BJ (cell line): ENCODE measurements at regions of chr14 and their contacts with region 1.

Region 1: DNA sequence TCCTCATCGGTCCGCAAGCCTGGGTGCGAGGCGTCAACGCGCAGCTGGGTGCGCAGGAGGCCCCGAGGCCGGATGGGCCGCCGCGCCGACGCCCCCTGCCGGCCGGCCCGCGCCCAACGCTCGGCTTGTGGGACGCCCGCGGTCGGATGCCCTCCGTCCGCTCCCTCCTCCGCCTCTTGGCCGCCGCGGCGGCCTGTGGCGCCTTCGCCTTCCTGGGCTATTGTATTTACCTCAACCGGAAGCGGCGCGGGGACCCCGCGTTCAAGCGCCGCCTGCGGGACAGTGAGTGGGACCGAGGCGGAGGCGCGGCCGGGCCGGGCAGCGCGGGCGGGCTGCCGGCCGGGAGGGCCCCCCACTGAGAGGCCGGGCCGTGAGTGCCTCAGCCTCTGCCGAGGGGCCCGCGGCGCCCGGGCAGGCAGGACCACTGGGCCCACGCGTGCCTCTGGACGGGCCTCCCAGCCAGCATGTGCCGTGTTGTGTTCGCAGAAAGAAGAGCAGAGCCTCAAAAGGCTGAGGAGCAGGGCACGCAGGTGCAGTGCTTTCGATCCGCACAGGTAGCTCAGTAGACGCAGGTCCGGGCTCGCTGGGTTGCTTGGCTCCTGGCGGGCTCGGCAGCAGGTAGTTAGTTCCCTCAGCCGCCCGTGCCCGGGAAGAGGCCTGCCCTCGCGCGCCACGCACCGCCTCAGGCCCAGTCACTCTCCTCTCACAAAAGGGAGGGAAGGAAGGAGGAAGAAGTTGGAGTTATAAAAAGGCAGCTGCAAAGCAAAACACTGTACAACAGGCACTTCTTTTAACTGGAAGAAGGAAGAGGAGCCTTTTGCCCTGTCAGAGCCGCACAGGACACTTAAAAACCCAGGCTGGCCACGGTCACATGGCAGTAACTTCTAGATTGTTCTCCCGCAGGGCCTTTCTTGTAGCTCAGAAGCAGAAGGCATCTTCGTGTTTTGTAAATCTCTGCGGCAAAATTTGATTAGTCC is at the start of gene TOMM20L:
- DNase-seq: no peak
- H3K4me3 ChIP-seq: peak within 1 kb of the TSS; percentile 45
- H3K27me3 ChIP-seq: no peaks in the 10 kb centered on the region
- CTCF ChIP-seq: no peak
- polyA plus RNA-seq, gene TOMM20L: not detected in 2 replicates

Region 2: GRCh38 chr14:58107947-58108552 is 288.1 kb before region 1 on chr14:
- CTCF ChIA-PET with region 1: interaction called, 19 read pairs
- POLR2A ChIA-PET with region 1: no interaction called
- DNase-seq: peak; percentile 7
- H3K4me3 ChIP-seq: no peak overlapping the region
- H3K27me3 ChIP-seq: peaks cover 9% of the 10 kb centered on the region
- CTCF ChIP-seq: peak; percentile 78

Region 3: DNA sequence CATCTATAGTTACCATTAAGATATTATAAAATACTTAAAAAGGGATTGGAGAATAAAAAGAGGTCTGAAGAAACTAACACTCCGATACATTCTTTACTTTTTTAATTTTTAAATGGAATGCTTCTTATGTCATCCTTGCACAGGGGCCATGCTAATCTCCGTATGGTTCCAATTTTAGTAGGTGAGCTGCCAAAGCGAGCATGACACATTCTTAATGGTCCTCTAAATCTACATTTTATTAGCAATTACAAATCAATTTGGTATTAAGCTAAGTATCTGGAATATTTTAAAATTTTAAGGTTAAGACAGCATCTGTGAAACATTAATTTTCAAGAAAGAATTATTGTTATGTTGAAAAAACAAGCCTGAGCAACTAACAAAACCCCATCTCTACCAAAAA is 103.9 kb before region 1 on chr14:
- CTCF ChIA-PET with region 1: no interaction called
- POLR2A ChIA-PET with region 1: no interaction called
- DNase-seq: peak; percentile 44
- H3K4me3 ChIP-seq: no peak overlapping the region
- H3K27me3 ChIP-seq: no peaks in the 10 kb centered on the region
- CTCF ChIP-seq: no peak

Region 4: DNA sequence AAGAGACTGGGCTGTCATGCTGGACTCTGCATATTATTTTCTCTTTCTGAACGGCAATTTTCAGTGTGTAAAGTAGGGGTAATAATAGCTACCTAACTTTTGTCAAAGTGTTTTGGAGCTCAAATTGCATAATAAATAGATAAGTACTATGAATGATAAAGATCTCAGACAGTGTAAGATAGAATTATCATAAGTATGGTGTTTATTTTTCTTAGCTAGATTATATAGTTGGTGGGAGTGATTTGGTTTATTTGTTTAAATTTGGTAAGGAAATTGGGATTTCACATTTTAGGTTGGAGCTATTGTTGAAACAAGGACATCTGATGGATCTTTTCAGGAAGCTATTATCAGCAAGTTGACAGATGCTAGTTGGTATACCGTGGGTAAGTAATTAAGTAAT is 90.4 kb before region 1 on chr14:
- CTCF ChIA-PET with region 1: no interaction called
- POLR2A ChIA-PET with region 1: no interaction called
- DNase-seq: no peak
- H3K4me3 ChIP-seq: no peak overlapping the region
- H3K27me3 ChIP-seq: no peaks in the 10 kb centered on the region
- CTCF ChIP-seq: no peak

Region 5: GRCh38 chr14:58414845-58415244 is 18.7 kb after region 1 on chr14:
- CTCF ChIA-PET with region 1: interaction called, 13 read pairs
- POLR2A ChIA-PET with region 1: no interaction called
- DNase-seq: no peak
- H3K4me3 ChIP-seq: no peak overlapping the region
- H3K27me3 ChIP-seq: no peaks in the 10 kb centered on the region
- CTCF ChIP-seq: no peak